ENCODE measurements at regions of chr7 and their contacts with region 1.

Region 1: GRCh38 chr7:15555381-15555859 is 6.4 kb downstream of the AGMO start:
- DNase-seq: no peak
- ATAC-seq: no peak
- H3K4me3 ChIP-seq: no peak overlapping the region
- H3K27ac ChIP-seq: no peak overlapping the region
- H3K4me1 ChIP-seq: no peaks in the 10 kb centered on the region
- H3K27me3 ChIP-seq: no peaks in the 10 kb centered on the region
- CTCF ChIP-seq: peak; percentile 14

Region 2: GRCh38 chr7:15503603-15504290 is 51.7 kb before region 1 on chr7:
- intact Hi-C with region 1: loop called in 1 of 2 experiments (anchors 2 kb)
- DNase-seq: no peak
- ATAC-seq: no peak
- H3K4me3 ChIP-seq: no peak overlapping the region
- H3K27ac ChIP-seq: no peak overlapping the region
- H3K4me1 ChIP-seq: no peaks in the 10 kb centered on the region
- H3K27me3 ChIP-seq: no peaks in the 10 kb centered on the region
- CTCF ChIP-seq: no peak

Region 3: GRCh38 chr7:15667991-15668390 is 112.6 kb after region 1 on chr7:
- intact Hi-C with region 1: no loop called
- DNase-seq: no peak
- ATAC-seq: no peak
- H3K4me3 ChIP-seq: no peak overlapping the region
- H3K27ac ChIP-seq: no peak overlapping the region
- H3K4me1 ChIP-seq: peaks cover 5% of the 10 kb centered on the region
- H3K27me3 ChIP-seq: no peaks in the 10 kb centered on the region
- CTCF ChIP-seq: no peak

Region 4: DNA sequence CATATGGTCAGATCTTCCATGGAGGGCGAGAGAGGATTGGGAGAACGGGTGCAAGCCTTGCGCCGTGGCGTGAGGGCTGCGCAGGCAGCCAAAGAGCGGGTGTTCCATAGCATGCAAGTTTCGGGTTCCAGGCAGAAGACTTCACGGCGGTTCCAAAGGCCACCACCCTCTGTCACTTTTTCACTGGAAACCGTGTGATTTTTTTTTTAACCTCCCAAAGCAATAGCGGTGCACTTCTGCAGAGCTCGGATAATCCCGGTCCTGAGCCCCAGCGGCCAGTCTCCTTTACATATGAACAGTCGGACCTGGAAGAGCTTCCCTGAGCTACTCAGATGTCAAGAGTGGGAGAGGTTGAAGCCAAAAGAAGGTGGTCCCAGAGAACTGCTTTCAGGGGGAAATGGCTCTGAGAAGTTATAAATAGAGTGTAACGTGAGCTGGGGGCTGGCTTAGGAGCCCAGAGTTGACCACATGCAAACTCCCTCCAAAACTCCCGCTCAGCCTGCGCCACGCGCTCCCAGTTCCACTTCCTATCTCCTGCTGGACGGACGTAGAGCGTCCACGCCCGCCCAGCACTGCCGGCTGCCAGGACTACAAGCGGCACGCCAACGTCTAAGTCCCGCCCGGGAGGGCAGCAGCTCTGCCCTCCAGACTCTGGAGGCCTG is 131.0 kb after region 1 on chr7 and contains the start of gene MEOX2:
- intact Hi-C with region 1: loop called in 1 of 2 experiments (anchors 5 kb)
- DNase-seq: peak; percentile 85 to 91
- ATAC-seq: peak; percentile 60 to 87 (median 84)
- H3K4me3 ChIP-seq: peak within 1 kb of the TSS; percentile 71
- H3K27ac ChIP-seq: peak within 1 kb of the TSS; percentile 76
- H3K4me1 ChIP-seq: no peaks in the 10 kb centered on the region
- H3K27me3 ChIP-seq: peaks cover 0 to 37% (median 12%) of the 10 kb centered on the region in 3 donors
- CTCF ChIP-seq: no peak
- total RNA-seq, gene MEOX2: 3.8 to 6.9 (median 5.3) TPM

Measured in psoas muscle (tissue), 8 donors.